Mammary epithelial cell (primary cell): ENCODE measurements at regions of chr1 and their contacts with region 1.

Region 1: GRCh38 chr1:7808253-7808844 is 24.3 kb downstream of the PER3 start:
- DNase-seq: peak; percentile 27
- H3K4me3 ChIP-seq: no peak overlapping the region
- H3K27ac ChIP-seq: no peak overlapping the region
- H3K4me1 ChIP-seq: peaks cover 9% of the 10 kb centered on the region
- H3K27me3 ChIP-seq: no peaks in the 10 kb centered on the region
- CTCF ChIP-seq: peak; percentile 50 to 53

Region 2: GRCh38 chr1:7726623-7727022 is 81.7 kb before region 1 on chr1:
- CTCF ChIA-PET with region 1: no interaction called
- dilution Hi-C with region 1: no loop called
- in situ Hi-C with region 1: no loop called
- intact Hi-C with region 1: no loop called
- DNase-seq: no peak
- H3K4me3 ChIP-seq: no peak overlapping the region
- H3K27ac ChIP-seq: no peak overlapping the region
- H3K4me1 ChIP-seq: no peaks in the 10 kb centered on the region
- H3K27me3 ChIP-seq: no peaks in the 10 kb centered on the region
- CTCF ChIP-seq: no peak

Region 3: GRCh38 chr1:7893529-7894180 is 85.3 kb after region 1 on chr1:
- CTCF ChIA-PET with region 1: no interaction called
- dilution Hi-C with region 1: no loop called
- in situ Hi-C with region 1: loop called in 1 of 2 experiments (anchors 10 kb)
- intact Hi-C with region 1: no loop called
- DNase-seq: no peak
- H3K4me3 ChIP-seq: no peak overlapping the region
- H3K27ac ChIP-seq: no peak overlapping the region
- H3K4me1 ChIP-seq: no peaks in the 10 kb centered on the region
- H3K27me3 ChIP-seq: no peaks in the 10 kb centered on the region
- CTCF ChIP-seq: no peak

Region 4: GRCh38 chr1:7961216-7962015 is 153.1 kb after region 1 on chr1 and contains the start of gene PARK7:
- CTCF ChIA-PET with region 1: no interaction called
- dilution Hi-C with region 1: no loop called
- in situ Hi-C with region 1: no loop called
- intact Hi-C with region 1: loop called (anchors 1 kb)
- DNase-seq: peak; percentile 100
- H3K4me3 ChIP-seq: peak within 1 kb of the TSS; percentile 89 to 92 (median 92)
- H3K27ac ChIP-seq: peak within 1 kb of the TSS; percentile 84
- H3K4me1 ChIP-seq: peaks cover 11% of the 10 kb centered on the region
- H3K27me3 ChIP-seq: no peaks in the 10 kb centered on the region
- CTCF ChIP-seq: peak; percentile 41 to 61
- total RNA-seq, gene PARK7: 106 to 264 TPM